ENCODE measurements at regions of chr19 and their contacts with region 1.

Region 1: GRCh38 chr19:12847159-12848139 is 9.1 kb downstream of the MAST1 start:
- H3K4me3 Mint-ChIP-seq: peak overlapping the region; percentile 57
- H3K27ac Mint-ChIP-seq: peak overlapping the region; percentile 31
- H3K4me1 Mint-ChIP-seq: peaks cover 10% of the 10 kb centered on the region
- H3K27me3 Mint-ChIP-seq: peaks cover 52% of the 10 kb centered on the region

Region 2: DNA sequence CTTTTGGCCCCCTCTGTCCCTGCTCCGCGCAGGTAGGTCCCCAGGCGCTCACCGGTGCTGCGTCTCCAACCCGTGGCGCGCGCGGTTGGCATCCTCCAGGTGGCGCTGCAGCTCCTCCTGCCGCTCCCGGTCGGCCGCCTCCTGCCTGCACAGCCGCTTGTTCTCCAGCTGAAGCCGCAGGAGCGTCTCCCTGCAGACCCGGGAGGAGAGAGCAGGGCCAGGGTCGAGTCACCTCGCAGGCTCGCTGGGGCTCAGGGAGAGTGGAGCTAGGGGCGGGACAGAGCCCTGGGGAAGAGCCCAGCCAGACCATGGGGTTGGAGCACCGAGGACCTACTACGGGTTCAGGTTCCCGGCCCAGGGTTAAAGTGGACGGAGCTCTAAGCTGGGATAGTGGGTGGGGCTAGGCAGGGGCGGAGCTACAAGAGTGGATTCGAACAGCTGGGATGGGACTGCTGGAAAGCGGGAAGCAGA is 81.4 kb before region 1 on chr19:
- intact Hi-C with region 1: loop called (anchors 2 kb)
- H3K4me3 Mint-ChIP-seq: peak overlapping the region; percentile 78
- H3K27ac Mint-ChIP-seq: peak overlapping the region; percentile 60
- H3K4me1 Mint-ChIP-seq: peaks cover 7% of the 10 kb centered on the region
- H3K27me3 Mint-ChIP-seq: no peaks in the 10 kb centered on the region

Region 3: DNA sequence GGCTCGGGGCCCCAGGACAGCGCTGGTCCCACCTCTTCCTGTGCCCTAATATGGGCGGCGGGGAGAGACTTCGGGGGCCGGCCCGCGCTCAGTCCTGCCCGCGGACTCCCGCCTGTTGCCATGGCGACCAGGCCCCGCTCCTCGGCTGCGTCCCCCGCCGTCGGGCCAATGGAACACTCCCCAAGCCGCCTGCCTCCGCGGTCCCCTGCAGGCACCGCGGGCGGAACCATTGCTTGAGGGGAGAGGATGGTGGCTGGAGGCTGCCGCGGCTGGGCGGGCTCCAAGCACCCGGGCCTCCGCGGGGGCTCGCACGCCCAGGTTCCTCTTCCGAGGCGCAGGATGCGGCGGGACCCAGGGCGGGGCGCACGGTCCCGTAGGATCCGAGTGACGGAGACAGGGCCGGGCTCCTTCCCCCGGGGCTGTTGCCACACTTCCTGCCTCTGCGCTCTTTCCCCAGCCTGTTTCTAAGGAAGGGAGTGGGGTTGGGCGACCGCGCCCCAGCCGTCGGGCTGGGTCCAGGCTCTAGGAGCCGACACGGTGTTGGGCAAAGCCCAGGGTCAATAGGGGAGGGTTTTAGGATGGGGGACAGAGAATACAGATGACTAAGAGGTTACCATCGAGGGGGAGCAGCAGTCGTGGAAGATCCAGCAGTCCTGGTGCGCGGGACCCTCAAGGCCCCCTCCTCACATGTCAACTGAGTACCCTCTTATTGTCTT is 57.4 kb before region 1 on chr19:
- intact Hi-C with region 1: no loop called
- H3K4me3 Mint-ChIP-seq: peak overlapping the region; percentile 95
- H3K27ac Mint-ChIP-seq: no peak overlapping the region
- H3K4me1 Mint-ChIP-seq: peaks cover 43% of the 10 kb centered on the region
- H3K27me3 Mint-ChIP-seq: no peaks in the 10 kb centered on the region